ENCODE measurements at regions of chr11 and their contacts with region 1.

Region 1: GRCh38 chr11:119018074-119018938 is at the starts of genes RPS25 and TRAPPC4:
- DNase-seq: peak; percentile 87
- H3K4me3 ChIP-seq: peak within 1 kb of the TSS; percentile 57
- CTCF ChIP-seq: no peak

Region 2: DNA sequence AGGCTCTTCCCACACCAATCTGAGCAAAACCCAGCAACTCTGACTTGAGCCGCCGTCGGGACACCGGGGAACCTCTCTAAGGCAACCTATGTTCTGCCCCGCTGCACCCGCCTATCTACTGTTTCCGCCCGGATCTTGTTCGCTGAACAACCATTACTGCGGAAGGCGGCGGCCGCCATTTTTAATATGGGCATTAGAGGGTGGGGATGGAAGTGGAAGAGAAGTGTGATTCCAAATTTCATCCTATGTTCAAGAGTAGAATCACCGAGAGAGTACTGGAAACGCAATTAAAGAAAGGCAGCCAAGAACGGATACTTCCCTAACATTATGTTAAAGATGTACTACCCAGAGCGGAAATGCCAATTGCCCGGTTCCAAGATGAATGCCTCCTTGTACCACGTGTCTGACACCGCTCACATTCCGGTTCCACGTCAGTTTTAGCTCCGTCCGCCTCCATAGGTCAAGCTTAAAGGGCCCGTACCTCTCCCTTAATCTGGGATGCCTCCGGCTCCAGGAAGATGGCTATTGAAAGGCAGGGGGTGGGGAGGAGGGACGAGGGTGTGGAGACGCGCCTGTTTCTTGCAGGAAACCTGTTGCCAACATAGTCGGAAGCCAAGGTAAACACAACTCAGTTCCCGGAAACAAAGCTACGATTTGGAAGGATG is 83.6 kb after region 1 on chr11 and contains the start of gene DPAGT1:
- in situ Hi-C with region 1: loop called (anchors 5 kb)
- DNase-seq: peak; percentile 95
- H3K4me3 ChIP-seq: peak within 1 kb of the TSS; percentile 91
- CTCF ChIP-seq: no peak